ENCODE measurements at regions of chr19 and their contacts with region 1.

Region 1: GRCh38 chr19:41426952-41427646 is at the start of gene B3GNT8:
- DNase-seq: no peak
- ATAC-seq: peak; percentile 7 to 10; a peak in 3 of 6 replicates
- H3K4me3 ChIP-seq: no peak within 1 kb of the TSS
- H3K27ac ChIP-seq: no peak within 1 kb of the TSS
- H3K4me1 ChIP-seq: no peaks in the 10 kb centered on the region
- CTCF ChIP-seq: no peak
- EP300 ChIP-seq: no peak
- POLR2A ChIP-seq: no peak
- RAD21 ChIP-seq: no peak
- polyA plus RNA-seq, gene B3GNT8: not detected in 2 replicates

Region 2: DNA sequence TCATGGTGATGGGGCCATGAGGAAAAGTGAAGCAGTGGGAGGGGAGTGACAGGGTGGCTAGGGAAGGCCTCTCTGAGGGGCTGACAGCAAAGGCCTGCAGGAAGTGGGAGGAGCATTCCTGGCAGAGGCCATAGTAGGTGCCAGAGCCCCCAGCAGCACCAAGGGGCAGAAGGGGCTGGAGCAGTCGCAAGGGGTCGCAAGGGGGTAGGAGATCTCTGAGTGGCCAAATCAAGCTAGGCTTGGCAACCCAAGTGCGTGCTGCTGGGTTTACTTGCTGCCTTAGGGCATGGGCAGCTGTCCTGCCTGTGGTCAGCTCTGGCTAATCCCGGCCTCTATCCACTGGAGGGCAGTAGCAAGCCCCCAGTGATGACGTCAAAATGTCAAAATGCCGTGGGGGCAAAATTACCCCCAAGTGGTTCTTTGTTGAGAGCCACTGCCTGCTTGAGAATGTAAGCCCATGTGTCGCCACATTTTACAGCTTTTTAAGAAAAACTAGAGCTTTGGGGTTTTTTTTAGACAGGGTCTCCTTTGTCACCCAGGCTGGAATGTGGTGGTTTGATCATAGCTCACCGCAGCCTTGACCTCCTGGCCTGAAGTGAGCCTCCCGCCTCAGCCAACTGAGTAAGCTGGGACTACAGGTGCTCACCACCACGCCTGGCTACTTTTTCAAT is 105.4 kb before region 1 on chr19:
- CTCF ChIA-PET with region 1: interaction called, 10 read pairs
- POLR2A ChIA-PET with region 1: no interaction called
- DNase-seq: peak; percentile 76 to 95
- ATAC-seq: peak; percentile 10 to 53; a peak in 3 of 6 replicates
- H3K4me3 ChIP-seq: no peak overlapping the region
- H3K27ac ChIP-seq: peak overlapping the region; percentile 81 to 91; a peak in 5 of 6 replicates
- H3K4me1 ChIP-seq: peaks cover 56% of the 10 kb centered on the region
- CTCF ChIP-seq: peak; percentile 88
- EP300 ChIP-seq: no peak
- POLR2A ChIP-seq: no peak
- RAD21 ChIP-seq: peak; percentile 61 to 62; a peak in 4 of 5 replicates

Region 3: DNA sequence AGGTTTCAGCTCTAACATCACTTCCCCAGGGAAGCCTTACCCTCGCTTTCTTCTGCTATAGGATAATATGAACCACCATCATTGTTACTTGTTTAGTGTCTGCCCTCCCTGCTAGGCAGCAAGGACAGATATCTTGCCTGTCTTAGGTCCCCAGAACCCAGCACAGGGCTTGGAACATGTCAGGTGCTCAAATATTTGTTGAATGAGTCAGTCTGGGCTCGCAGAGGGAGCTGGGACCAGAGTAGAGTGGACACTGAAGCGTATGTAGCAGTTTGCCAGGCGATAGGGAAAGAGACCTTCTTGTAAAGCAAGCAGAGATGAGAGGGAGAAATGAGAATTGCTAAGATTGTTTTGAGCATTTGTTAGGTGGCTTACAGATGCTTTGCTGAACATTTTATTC is 17.8 kb before region 1 on chr19:
- CTCF ChIA-PET with region 1: interaction called, 27 read pairs
- POLR2A ChIA-PET with region 1: interaction called, 4 read pairs
- DNase-seq: peak; percentile 55 to 60
- ATAC-seq: peak; percentile 55 to 58; a peak in 5 of 6 replicates
- H3K4me3 ChIP-seq: no peak overlapping the region
- H3K27ac ChIP-seq: no peak overlapping the region
- H3K4me1 ChIP-seq: peaks cover 12% of the 10 kb centered on the region
- CTCF ChIP-seq: no peak
- EP300 ChIP-seq: no peak
- POLR2A ChIP-seq: no peak
- RAD21 ChIP-seq: no peak

Region 4: GRCh38 chr19:41495589-41495988 is 68.5 kb after region 1 on chr19:
- CTCF ChIA-PET with region 1: no interaction called
- POLR2A ChIA-PET with region 1: no interaction called
- DNase-seq: no peak
- ATAC-seq: no peak
- H3K4me3 ChIP-seq: no peak overlapping the region
- H3K27ac ChIP-seq: no peak overlapping the region
- H3K4me1 ChIP-seq: peaks cover 3% of the 10 kb centered on the region
- CTCF ChIP-seq: no peak
- EP300 ChIP-seq: no peak
- POLR2A ChIP-seq: no peak
- RAD21 ChIP-seq: no peak

Region 5: GRCh38 chr19:41785653-41786052 is 358.6 kb after region 1 on chr19:
- CTCF ChIA-PET with region 1: no interaction called
- POLR2A ChIA-PET with region 1: no interaction called
- DNase-seq: peak; percentile 93 to 99
- ATAC-seq: peak; percentile 74 to 92
- H3K4me3 ChIP-seq: no peak overlapping the region
- H3K27ac ChIP-seq: no peak overlapping the region
- H3K4me1 ChIP-seq: peaks cover 5% of the 10 kb centered on the region; the same call in 1 of the 3 replicates
- CTCF ChIP-seq: peak; percentile 99
- EP300 ChIP-seq: no peak
- POLR2A ChIP-seq: no peak
- RAD21 ChIP-seq: peak; percentile 80 to 88